Caco-2 (cell line): ENCODE measurements at regions of chr6 and their contacts with region 1.

Region 1: DNA sequence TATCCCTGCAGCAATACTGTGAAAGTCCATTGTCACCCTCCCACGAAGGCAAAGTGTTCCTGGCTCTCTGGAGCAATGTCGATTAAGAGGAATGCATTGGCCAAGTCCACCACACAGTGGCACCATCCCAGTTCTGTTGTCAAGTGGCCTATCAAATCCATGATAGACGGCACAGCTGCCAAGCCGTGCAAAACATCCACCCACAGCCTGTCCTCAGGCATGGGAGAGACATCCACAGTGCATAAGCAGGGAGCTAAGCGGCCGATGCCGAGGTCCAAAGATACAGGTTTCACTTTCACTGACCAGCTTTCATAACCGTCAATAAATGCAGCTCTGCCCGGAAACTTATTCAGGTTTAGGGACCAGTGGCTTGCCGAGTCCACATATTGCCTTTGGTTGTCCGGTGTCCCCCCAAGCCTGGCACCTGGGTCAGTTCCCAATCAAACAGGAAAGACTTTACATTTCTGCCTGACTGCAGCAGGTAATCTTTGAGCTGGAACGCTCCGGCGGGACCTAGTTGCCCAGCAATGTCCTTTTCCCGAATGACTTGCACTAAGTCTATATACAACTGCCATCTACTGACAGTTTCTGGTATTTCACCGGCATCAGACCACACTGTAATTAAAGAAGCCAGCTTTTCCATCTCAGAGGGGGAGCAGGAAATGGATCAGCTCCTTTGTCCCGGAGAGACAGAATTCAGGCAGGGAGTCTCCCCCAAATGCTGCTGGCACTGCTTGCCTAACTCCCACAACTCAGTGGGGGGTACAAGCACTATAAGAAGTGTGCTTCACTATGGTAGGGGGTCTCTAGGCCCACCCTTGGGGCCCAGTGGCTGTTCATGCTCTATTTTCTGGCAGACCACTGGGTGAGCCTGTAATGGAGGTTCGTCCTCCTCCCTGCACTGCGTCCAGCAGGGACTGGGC is 6.3 kb downstream of the ZKSCAN3 start:
- DNase-seq: peak; percentile 66 to 77
- H3K4me3 ChIP-seq: peak overlapping the region; percentile 44
- H3K4me3 Mint-ChIP-seq: peak overlapping the region; percentile 71
- H3K27ac Mint-ChIP-seq: no peak overlapping the region
- H3K4me1 ChIP-seq: 0 out of 2 replicates have a peak, but pooled peaks cover 16% of the 10 kb centered on the region
- H3K4me1 Mint-ChIP-seq: no peaks in the 10 kb centered on the region
- H3K27me3 ChIP-seq: no peaks in the 10 kb centered on the region
- H3K27me3 Mint-ChIP-seq: no peaks in the 10 kb centered on the region
- CTCF ChIP-seq: peak; percentile 68 to 70

Region 2: DNA sequence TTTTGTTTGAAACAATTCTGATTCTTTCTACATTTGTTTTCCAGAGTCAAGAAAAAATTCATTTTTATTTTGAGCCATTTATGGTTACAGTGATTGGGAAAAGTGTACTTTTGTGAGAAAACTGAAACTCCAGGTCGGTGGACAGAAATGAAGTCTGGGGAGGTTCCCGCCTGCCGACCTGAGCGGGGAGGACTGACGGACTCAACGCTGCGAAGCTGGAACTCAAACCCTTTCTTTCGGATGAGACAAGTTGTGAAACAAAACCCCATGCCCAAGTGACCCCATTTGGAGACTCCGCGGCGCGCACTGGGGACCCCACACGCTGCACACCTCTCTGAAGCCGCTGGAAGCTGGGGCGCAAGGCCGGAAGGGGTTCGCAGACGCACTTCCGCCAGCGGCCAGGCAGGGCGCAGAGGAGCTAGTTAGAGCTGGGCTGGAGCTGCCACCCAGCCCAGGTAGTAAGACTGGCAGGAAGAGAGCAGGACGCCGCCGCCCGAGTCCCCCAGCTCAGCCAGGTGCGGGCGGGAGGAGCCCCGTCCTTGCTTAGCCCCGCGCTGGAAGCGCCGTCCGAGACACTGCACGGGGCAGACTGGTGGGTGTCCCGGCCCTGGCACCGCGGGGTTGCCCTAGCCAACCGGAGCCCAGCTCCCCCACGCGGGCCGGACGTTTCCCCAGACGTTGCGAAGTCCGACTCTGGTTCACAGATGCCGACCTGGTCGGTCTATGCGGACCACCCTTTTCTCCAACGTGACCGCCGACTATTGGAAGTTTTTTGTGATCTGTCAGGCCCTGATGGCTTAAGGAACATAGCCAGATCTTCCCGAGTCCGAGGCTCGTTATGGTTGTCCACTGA is 251.4 kb before region 1 on chr6:
- CTCF ChIA-PET with region 1: interaction called, 15 read pairs
- POLR2A ChIA-PET with region 1: no interaction called
- intact Hi-C with region 1: no loop called
- DNase-seq: peak; percentile 81
- H3K4me3 ChIP-seq: peak overlapping the region; percentile 79
- H3K4me3 Mint-ChIP-seq: peak overlapping the region; percentile 79
- H3K27ac Mint-ChIP-seq: peak overlapping the region; percentile 29
- H3K4me1 ChIP-seq: no peaks in the 10 kb centered on the region
- H3K4me1 Mint-ChIP-seq: peaks cover 11% of the 10 kb centered on the region
- H3K27me3 ChIP-seq: no peaks in the 10 kb centered on the region
- H3K27me3 Mint-ChIP-seq: peaks cover 8% of the 10 kb centered on the region
- CTCF ChIP-seq: peak; percentile 68 to 70

Region 3: DNA sequence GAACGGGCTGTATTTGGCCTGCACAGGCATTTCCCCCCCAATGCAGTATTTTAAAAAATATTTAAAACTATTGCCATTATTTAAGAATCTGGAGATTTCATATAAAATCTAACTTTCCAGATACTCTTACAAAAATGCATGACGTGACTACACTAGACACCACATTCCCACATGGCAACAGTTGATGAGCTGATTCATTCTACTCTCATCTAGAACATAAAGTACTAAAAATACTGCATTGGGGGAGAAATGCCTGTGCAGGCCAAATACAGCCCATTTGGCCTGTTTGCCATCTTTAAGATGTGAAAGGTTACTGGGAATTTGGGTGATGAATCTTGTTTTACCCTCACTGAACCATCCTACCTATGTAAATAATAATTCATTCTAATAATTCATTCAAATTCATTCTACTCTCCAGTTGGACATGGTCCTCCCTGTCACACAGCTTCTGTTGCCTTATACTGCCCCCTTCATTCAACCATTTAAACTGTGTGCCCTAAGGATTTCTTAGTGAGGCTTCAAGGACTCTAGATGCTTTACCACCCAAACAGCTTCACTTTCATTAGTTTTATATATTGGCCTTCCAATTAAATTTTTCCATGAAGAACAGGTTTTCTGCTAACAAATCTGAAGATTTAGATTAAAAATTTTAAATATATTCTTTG is 238.5 kb before region 1 on chr6:
- CTCF ChIA-PET with region 1: no interaction called
- POLR2A ChIA-PET with region 1: no interaction called
- intact Hi-C with region 1: no loop called
- DNase-seq: no peak
- H3K4me3 ChIP-seq: no peak overlapping the region
- H3K4me3 Mint-ChIP-seq: no peak overlapping the region
- H3K27ac Mint-ChIP-seq: no peak overlapping the region
- H3K4me1 ChIP-seq: no peaks in the 10 kb centered on the region
- H3K4me1 Mint-ChIP-seq: no peaks in the 10 kb centered on the region
- H3K27me3 ChIP-seq: no peaks in the 10 kb centered on the region
- H3K27me3 Mint-ChIP-seq: no peaks in the 10 kb centered on the region
- CTCF ChIP-seq: no peak

Region 4: GRCh38 chr6:28225056-28225834 is 130.8 kb before region 1 on chr6 and contains the start of gene ZSCAN9:
- CTCF ChIA-PET with region 1: no interaction called
- POLR2A ChIA-PET with region 1: no interaction called
- intact Hi-C with region 1: loop called (anchors 1 kb)
- DNase-seq: peak; percentile 88 to 90
- H3K4me3 ChIP-seq: peak within 1 kb of the TSS; percentile 72
- H3K4me3 Mint-ChIP-seq: peak within 1 kb of the TSS; percentile 96
- H3K27ac Mint-ChIP-seq: peak within 1 kb of the TSS; percentile 82
- H3K4me1 ChIP-seq: peaks cover 5% of the 10 kb centered on the region; the same call in 1 of the 2 replicates
- H3K4me1 Mint-ChIP-seq: peaks cover 9% of the 10 kb centered on the region
- H3K27me3 ChIP-seq: peaks cover 1% of the 10 kb centered on the region; the same call in 1 of the 2 replicates
- H3K27me3 Mint-ChIP-seq: no peaks in the 10 kb centered on the region
- CTCF ChIP-seq: no peak
- total RNA-seq, gene ZSCAN9: 13.7 and 13.9 TPM in 2 replicates

Region 5: DNA sequence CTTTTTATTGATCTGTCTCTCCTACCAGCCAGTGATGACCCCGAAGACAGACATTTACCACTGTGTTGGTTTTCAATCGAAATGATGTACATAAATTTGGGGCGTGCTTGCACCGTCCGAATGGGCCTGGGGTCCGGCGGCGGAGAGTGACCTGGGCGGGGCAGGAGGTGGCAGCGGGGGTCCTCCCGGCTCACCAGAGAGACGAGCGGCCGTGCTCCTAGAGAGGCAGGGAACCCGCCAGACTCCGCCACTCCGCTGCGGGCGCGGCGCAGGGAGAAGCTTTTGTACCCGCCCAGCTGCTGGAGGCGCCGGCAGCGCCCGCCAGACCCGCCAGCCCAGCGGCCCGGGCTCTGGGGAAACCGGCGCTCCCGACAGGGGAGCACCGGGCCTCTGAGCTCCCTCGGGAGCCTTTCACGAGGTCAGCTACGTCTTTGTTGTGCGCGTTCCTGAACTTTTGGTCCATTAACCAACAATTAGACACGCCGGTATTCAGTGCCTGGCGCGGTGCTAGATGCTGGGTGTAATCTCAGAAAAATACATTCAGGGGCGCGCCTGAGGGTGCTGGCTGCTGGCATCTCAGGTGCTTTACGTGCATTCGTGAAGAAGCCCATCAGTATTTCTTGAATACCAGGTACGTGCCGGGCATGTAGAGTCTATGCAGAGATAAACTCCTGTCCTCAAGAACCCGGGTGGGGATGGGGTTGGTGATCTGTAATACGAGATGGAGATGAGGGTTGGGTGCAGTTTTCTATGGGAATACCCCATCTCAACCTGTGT is 74.5 kb before region 1 on chr6 and contains the start of gene PGBD1:
- CTCF ChIA-PET with region 1: interaction called, 14 read pairs
- POLR2A ChIA-PET with region 1: interaction called, 3 read pairs
- intact Hi-C with region 1: no loop called
- DNase-seq: peak; percentile 81 to 84
- H3K4me3 ChIP-seq: peak within 1 kb of the TSS; percentile 74
- H3K4me3 Mint-ChIP-seq: peak within 1 kb of the TSS; percentile 85
- H3K27ac Mint-ChIP-seq: no peak within 1 kb of the TSS
- H3K4me1 ChIP-seq: 0 out of 2 replicates have a peak, but pooled peaks cover 4% of the 10 kb centered on the region
- H3K4me1 Mint-ChIP-seq: peaks cover 10% of the 10 kb centered on the region
- H3K27me3 ChIP-seq: no peaks in the 10 kb centered on the region
- H3K27me3 Mint-ChIP-seq: no peaks in the 10 kb centered on the region
- CTCF ChIP-seq: no peak
- total RNA-seq, gene PGBD1: 3.6 and 3.8 TPM in 2 replicates

Region 6: DNA sequence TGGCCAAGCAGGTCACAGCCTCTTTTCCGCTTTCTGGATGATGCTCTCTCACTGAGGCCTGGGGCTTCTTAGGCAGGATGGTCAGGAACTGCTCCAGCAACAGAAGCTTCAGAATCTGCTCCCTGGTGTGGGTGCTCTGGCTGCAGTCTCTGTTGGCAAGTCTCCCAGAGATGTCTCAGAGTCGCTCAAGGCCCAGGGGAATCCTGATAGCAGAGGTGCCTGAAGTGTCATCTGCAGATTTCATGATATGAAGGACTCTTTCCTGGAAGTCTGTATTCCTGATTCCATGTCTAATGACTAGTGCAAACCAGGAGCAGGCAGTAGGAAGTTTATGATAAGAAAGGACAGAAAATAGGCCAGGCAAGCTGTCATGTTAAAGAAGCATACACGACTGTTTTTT is 40.4 kb before region 1 on chr6:
- CTCF ChIA-PET with region 1: no interaction called
- POLR2A ChIA-PET with region 1: no interaction called
- intact Hi-C with region 1: no loop called
- DNase-seq: no peak
- H3K4me3 ChIP-seq: no peak overlapping the region
- H3K4me3 Mint-ChIP-seq: no peak overlapping the region
- H3K27ac Mint-ChIP-seq: no peak overlapping the region
- H3K4me1 ChIP-seq: peaks cover 6% of the 10 kb centered on the region
- H3K4me1 Mint-ChIP-seq: peaks cover 5% of the 10 kb centered on the region
- H3K27me3 ChIP-seq: no peaks in the 10 kb centered on the region
- H3K27me3 Mint-ChIP-seq: no peaks in the 10 kb centered on the region
- CTCF ChIP-seq: no peak

Region 7: DNA sequence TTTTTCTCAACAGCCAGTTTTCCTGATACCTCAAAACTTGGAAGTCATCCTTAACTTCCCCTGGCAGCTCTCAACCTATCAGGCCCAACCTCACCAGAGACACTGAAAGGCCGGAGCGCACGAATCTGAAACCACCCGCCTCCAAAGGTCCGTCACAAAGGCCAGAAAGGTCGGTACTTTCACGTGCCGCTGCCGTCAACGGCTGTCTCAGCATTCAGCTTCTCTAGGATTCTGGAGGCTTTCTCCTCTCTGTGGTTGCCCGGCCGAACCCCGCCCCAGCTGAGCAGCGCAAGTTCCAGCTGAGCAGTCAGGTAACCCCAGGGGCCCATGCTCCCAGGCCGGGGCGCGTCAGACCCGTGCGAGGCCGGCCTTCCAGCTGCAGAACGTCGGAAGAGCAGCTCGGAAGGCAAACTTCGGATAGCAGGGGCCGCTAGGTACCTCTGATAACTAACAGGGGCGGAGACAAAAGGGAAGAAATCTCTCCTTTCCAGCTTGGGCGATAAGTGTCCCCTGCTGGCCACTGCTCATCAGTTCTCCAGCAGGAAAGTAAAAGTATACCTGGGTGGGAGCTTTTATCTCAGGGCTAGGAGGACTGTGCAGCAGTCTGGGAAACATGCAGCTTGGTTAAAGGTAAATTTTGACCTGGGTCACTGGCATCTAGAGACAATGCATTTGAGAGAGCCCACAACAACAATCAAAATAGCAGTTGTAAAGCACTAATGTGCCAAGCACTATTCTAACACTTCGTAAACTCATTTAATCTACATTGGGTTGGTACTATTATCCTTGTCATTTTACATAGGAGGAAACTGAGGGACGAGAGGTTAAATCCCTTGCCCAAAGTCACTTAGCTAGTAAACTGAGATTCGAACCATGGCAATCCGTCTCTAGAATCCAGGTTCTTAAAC is 27.5 kb after region 1 on chr6:
- CTCF ChIA-PET with region 1: interaction called, 26 read pairs
- POLR2A ChIA-PET with region 1: interaction called, 6 read pairs
- intact Hi-C with region 1: loop called (anchors 2 kb)
- DNase-seq: peak; percentile 95
- H3K4me3 ChIP-seq: peak overlapping the region; percentile 50
- H3K4me3 Mint-ChIP-seq: peak overlapping the region; percentile 82
- H3K27ac Mint-ChIP-seq: peak overlapping the region; percentile 87
- H3K4me1 ChIP-seq: peaks cover 11% of the 10 kb centered on the region; the same call in 1 of the 2 replicates
- H3K4me1 Mint-ChIP-seq: peaks cover 18% of the 10 kb centered on the region
- H3K27me3 ChIP-seq: no peaks in the 10 kb centered on the region
- H3K27me3 Mint-ChIP-seq: peaks cover 7% of the 10 kb centered on the region
- CTCF ChIP-seq: peak; percentile 57 to 76